B cell (primary cell): ENCODE measurements at regions of chr9 and their contacts with region 1.

Region 1: GRCh38 chr9:36166101-36166927 is 2.9 kb upstream of the CCIN start:
- DNase-seq: peak; percentile 88
- ATAC-seq: peak; percentile 99
- H3K4me3 ChIP-seq: peak overlapping the region in 4 of 5 experiments; percentile 43 to 63 (median 52)
- H3K4me3 Mint-ChIP-seq: peak overlapping the region; percentile 83
- H3K27ac ChIP-seq: no peak overlapping the region
- H3K27ac Mint-ChIP-seq: peak overlapping the region; percentile 29
- H3K4me1 ChIP-seq: peaks cover 0 to 10% of the 10 kb centered on the region in 2 donors
- H3K4me1 Mint-ChIP-seq: peaks cover 3% of the 10 kb centered on the region
- H3K27me3 ChIP-seq: no peaks in the 10 kb centered on the region
- H3K27me3 Mint-ChIP-seq: peaks cover 2% of the 10 kb centered on the region
- CTCF ChIP-seq: peak; percentile 98

Region 2: DNA sequence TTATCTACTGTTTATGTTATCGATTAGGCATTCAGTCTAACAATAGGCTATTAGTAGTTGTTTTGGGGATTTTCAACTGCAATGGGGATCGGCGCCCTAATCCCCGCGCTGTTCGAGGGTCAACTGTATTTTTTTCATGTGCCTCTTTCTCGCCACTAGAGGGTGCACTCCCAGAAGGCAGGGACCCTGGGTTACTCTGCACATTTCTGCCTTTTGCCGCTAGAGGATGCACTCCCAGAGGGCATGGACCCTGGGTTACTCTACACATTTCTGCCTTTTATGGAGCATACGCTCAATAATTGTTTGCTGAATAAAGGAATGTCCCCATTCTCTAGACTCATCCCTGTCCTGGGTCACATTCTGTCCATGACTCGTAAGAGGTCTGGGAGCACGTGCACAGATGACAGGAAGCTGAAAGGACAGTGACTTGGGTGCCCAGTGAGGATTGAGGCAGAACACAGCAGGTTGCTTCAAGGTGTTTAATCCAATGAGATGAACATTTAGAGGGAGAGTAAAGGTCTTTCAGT is 157.5 kb before region 1 on chr9:
- CTCF ChIA-PET with region 1: interaction called, 6 read pairs
- POLR2A ChIA-PET with region 1: no interaction called
- intact Hi-C with region 1: loop called (anchors 1 kb)
- DNase-seq: peak; percentile 76
- ATAC-seq: peak; percentile 94
- H3K4me3 ChIP-seq: no peak overlapping the region
- H3K4me3 Mint-ChIP-seq: no peak overlapping the region
- H3K27ac ChIP-seq: no peak overlapping the region
- H3K27ac Mint-ChIP-seq: no peak overlapping the region
- H3K4me1 ChIP-seq: peaks cover 20 to 29% of the 10 kb centered on the region in 2 donors
- H3K4me1 Mint-ChIP-seq: peaks cover 23% of the 10 kb centered on the region
- H3K27me3 ChIP-seq: peaks cover 0 to 22% (median 7%) of the 10 kb centered on the region in 4 experiments
- H3K27me3 Mint-ChIP-seq: peaks cover 28% of the 10 kb centered on the region
- CTCF ChIP-seq: peak; percentile 100

Region 3: DNA sequence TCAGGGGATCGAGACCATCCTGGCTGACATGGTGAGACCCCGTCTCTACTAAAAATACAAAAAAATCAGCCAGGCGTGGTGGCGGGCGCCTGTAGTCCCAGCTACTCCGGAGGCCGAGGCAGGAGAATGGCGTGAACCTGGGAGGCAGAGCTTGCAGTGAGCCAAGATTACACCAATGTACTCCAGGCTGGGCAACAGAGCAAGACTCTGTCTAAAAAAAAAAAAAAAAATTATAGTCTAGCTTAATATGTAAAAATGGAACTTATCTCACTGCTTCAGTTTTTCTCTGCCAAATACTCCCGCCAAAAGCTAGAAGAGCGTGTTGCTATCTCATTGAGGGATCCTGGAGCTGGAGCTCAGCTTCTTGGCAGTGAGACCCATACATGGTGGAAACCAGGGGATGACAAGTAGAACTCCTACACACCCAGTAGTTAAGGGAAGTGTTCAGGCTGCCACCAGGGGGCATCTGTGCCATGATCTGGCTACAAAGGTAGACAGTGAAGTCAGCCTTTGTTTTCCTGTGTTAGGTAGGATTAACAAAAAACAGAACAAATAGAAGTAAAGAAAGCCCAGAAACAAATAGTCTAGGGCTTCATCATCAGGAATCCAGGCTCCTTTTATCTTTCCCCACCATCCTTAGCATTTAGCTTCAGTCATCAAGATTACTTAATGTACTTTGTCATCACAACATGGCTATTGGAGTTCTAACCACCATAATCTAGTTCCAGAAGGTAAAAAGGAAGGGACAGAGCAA is 63.4 kb before region 1 on chr9:
- CTCF ChIA-PET with region 1: interaction called, 435 read pairs
- POLR2A ChIA-PET with region 1: interaction called, 6 read pairs
- intact Hi-C with region 1: loop called (anchors 1 kb)
- DNase-seq: peak; percentile 88
- ATAC-seq: peak; percentile 99
- H3K4me3 ChIP-seq: no peak overlapping the region
- H3K4me3 Mint-ChIP-seq: no peak overlapping the region
- H3K27ac ChIP-seq: no peak overlapping the region
- H3K27ac Mint-ChIP-seq: no peak overlapping the region
- H3K4me1 ChIP-seq: peaks cover 0 to 3% of the 10 kb centered on the region in 2 donors
- H3K4me1 Mint-ChIP-seq: peaks cover 5% of the 10 kb centered on the region
- H3K27me3 ChIP-seq: no peaks in the 10 kb centered on the region
- H3K27me3 Mint-ChIP-seq: no peaks in the 10 kb centered on the region
- CTCF ChIP-seq: peak; percentile 90

Region 4: DNA sequence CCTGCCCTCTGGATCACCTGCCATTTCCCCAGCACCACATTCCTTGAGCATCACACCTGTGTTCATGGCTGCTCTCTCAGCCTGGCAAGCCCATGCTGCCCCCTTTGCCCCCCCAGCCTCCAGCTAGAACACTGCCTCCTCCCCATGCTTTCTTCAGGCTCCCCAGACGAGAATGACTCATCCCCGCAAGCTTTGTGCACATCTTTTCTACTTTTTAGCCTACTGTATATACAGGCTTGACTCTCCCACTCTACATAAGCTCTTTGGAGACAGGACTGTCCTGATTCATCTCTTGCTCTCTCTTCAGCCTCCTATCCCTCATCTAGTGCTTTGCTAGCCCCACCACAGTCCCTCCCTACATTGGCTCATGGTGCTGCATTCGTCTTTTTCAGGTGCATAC is 49.7 kb before region 1 on chr9:
- CTCF ChIA-PET with region 1: interaction called, 33 read pairs
- POLR2A ChIA-PET with region 1: no interaction called
- intact Hi-C with region 1: no loop called
- DNase-seq: no peak
- ATAC-seq: no peak
- H3K4me3 ChIP-seq: no peak overlapping the region
- H3K4me3 Mint-ChIP-seq: no peak overlapping the region
- H3K27ac ChIP-seq: no peak overlapping the region
- H3K27ac Mint-ChIP-seq: no peak overlapping the region
- H3K4me1 ChIP-seq: no peaks in the 10 kb centered on the region
- H3K4me1 Mint-ChIP-seq: no peaks in the 10 kb centered on the region
- H3K27me3 ChIP-seq: no peaks in the 10 kb centered on the region
- H3K27me3 Mint-ChIP-seq: no peaks in the 10 kb centered on the region
- CTCF ChIP-seq: no peak

Region 5: GRCh38 chr9:36142510-36143244 is 23.6 kb before region 1 on chr9:
- CTCF ChIA-PET with region 1: interaction called, 54 read pairs
- POLR2A ChIA-PET with region 1: no interaction called
- intact Hi-C with region 1: no loop called
- DNase-seq: peak; percentile 62
- ATAC-seq: peak; percentile 54
- H3K4me3 ChIP-seq: peak overlapping the region; percentile 43 to 83 (median 80)
- H3K4me3 Mint-ChIP-seq: peak overlapping the region; percentile 93
- H3K27ac ChIP-seq: peak overlapping the region; percentile 85 to 92
- H3K27ac Mint-ChIP-seq: peak overlapping the region; percentile 99
- H3K4me1 ChIP-seq: peaks cover 63 to 78% of the 10 kb centered on the region in 2 donors
- H3K4me1 Mint-ChIP-seq: peaks cover 93% of the 10 kb centered on the region
- H3K27me3 ChIP-seq: no peaks in the 10 kb centered on the region
- H3K27me3 Mint-ChIP-seq: no peaks in the 10 kb centered on the region
- CTCF ChIP-seq: no peak

Region 6: GRCh38 chr9:36317764-36318163 is 151.4 kb after region 1 on chr9:
- CTCF ChIA-PET with region 1: no interaction called
- POLR2A ChIA-PET with region 1: no interaction called
- intact Hi-C with region 1: no loop called
- DNase-seq: no peak
- ATAC-seq: no peak
- H3K4me3 ChIP-seq: no peak overlapping the region
- H3K4me3 Mint-ChIP-seq: no peak overlapping the region
- H3K27ac ChIP-seq: no peak overlapping the region
- H3K27ac Mint-ChIP-seq: no peak overlapping the region
- H3K4me1 ChIP-seq: no peaks in the 10 kb centered on the region
- H3K4me1 Mint-ChIP-seq: no peaks in the 10 kb centered on the region
- H3K27me3 ChIP-seq: peaks cover 0 to 10% (median 0%) of the 10 kb centered on the region in 4 experiments
- H3K27me3 Mint-ChIP-seq: peaks cover 3% of the 10 kb centered on the region
- CTCF ChIP-seq: no peak

Region 7: GRCh38 chr9:36597412-36598178 is 431.3 kb after region 1 on chr9:
- CTCF ChIA-PET with region 1: no interaction called
- POLR2A ChIA-PET with region 1: no interaction called
- intact Hi-C with region 1: no loop called
- DNase-seq: peak; percentile 16
- ATAC-seq: no peak
- H3K4me3 ChIP-seq: no peak overlapping the region
- H3K4me3 Mint-ChIP-seq: no peak overlapping the region
- H3K27ac ChIP-seq: no peak overlapping the region
- H3K27ac Mint-ChIP-seq: no peak overlapping the region
- H3K4me1 ChIP-seq: no peaks in the 10 kb centered on the region
- H3K4me1 Mint-ChIP-seq: peaks cover under 1% of the 10 kb centered on the region
- H3K27me3 ChIP-seq: no peaks in the 10 kb centered on the region
- H3K27me3 Mint-ChIP-seq: no peaks in the 10 kb centered on the region
- CTCF ChIP-seq: peak; percentile 32